PC-9 (cell line): ENCODE measurements at regions of chr2 and their contacts with region 1.

Region 1: GRCh38 chr2:55268907-55269644 is at the start of gene MTIF2:
- DNase-seq: peak; percentile 93 to 98
- H3K4me3 ChIP-seq: peak within 1 kb of the TSS; percentile 85
- H3K27ac ChIP-seq: peak within 1 kb of the TSS; percentile 64
- H3K4me1 ChIP-seq: peaks cover 14% of the 10 kb centered on the region
- H3K27me3 ChIP-seq: no peaks in the 10 kb centered on the region
- CTCF ChIP-seq: no peak
- total RNA-seq, gene MTIF2: 44.6 and 52.0 TPM in 2 replicates

Region 2: GRCh38 chr2:55232084-55232862 is 36.8 kb before region 1 on chr2 and contains the starts of genes CLHC1 and RPS27A:
- CTCF ChIA-PET with region 1: interaction called, 5 read pairs
- POLR2A ChIA-PET with region 1: no interaction called
- intact Hi-C with region 1: loop called (anchors 1 kb)
- DNase-seq: peak; percentile 94 to 98
- H3K4me3 ChIP-seq: peak within 1 kb of the TSS; percentile 97
- H3K27ac ChIP-seq: peak within 1 kb of the TSS; percentile 83
- H3K4me1 ChIP-seq: peaks cover 29% of the 10 kb centered on the region
- H3K27me3 ChIP-seq: no peaks in the 10 kb centered on the region
- CTCF ChIP-seq: peak; percentile 7; the same call in 1 of the 2 replicates
- total RNA-seq, gene CLHC1: 20.5 and 27.1 TPM in 2 replicates
- total RNA-seq, gene RPS27A: 1,269 and 1,616 TPM in 2 replicates

Region 3: GRCh38 chr2:55425431-55425831 is 156.4 kb after region 1 on chr2:
- CTCF ChIA-PET with region 1: no interaction called
- POLR2A ChIA-PET with region 1: no interaction called
- intact Hi-C with region 1: loop called (anchors 2 kb)
- DNase-seq: peak; percentile 29 to 99
- H3K4me3 ChIP-seq: no peak overlapping the region
- H3K27ac ChIP-seq: peak overlapping the region; percentile 68
- H3K4me1 ChIP-seq: peaks cover 38% of the 10 kb centered on the region
- H3K27me3 ChIP-seq: no peaks in the 10 kb centered on the region
- CTCF ChIP-seq: no peak

Region 4: DNA sequence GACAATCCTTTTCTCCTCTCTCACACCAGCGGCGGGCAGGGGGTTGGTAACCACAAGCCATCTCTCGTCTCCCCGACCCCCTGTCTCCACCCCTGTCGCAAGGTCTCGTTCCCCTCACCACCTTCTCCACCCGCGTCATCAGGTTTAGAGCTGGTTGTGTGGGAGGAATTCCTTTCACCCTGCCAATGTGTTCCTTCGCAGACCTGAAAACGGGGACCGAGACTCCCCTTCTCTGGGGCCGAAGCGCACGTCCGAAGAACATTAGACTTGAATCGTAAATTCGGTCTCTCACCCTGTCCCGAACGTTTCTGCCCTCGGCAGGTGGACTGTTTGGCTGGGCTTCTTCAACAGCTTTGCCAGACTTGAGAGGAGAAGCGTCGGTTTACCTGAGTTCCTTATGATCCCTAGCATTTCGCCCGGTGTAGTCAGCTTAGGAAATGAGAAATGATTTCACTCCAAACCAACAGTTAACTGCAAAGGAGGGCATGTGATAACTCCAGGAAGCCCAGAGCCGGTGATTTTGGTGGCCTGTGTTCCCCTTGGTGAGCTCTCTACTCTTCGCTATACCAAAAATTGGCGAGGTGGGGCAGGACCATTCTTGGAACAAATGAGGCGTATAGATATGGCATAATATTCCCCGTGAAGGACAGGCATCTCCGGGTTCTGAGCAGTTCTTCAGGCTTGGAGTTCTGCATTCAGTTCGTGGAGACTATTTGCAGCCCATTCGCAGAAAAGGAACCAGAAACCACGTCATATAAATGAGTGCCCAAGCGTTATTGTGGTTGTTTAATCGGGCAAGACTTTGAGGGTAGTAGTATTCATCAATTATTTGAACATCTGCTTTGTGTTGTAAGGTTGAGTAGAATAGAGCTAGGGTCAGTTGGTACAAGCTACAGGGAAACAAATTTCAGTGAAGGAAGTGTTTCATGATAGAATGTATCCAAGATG is 251.1 kb after region 1 on chr2:
- CTCF ChIA-PET with region 1: no interaction called
- POLR2A ChIA-PET with region 1: no interaction called
- intact Hi-C with region 1: loop called (anchors 2 kb)
- DNase-seq: peak in 1 of 2 experiments; percentile 37
- H3K4me3 ChIP-seq: peak overlapping the region; percentile 86
- H3K27ac ChIP-seq: peak overlapping the region; percentile 32
- H3K4me1 ChIP-seq: peaks cover 18% of the 10 kb centered on the region
- H3K27me3 ChIP-seq: no peaks in the 10 kb centered on the region
- CTCF ChIP-seq: no peak

Region 5: GRCh38 chr2:56132138-56132537 is 863.1 kb after region 1 on chr2:
- CTCF ChIA-PET with region 1: no interaction called
- POLR2A ChIA-PET with region 1: no interaction called
- intact Hi-C with region 1: loop called (anchors 10 kb)
- DNase-seq: peak in 1 of 2 experiments; percentile 50
- H3K4me3 ChIP-seq: no peak overlapping the region
- H3K27ac ChIP-seq: no peak overlapping the region
- H3K4me1 ChIP-seq: no peaks in the 10 kb centered on the region
- H3K27me3 ChIP-seq: peaks cover 15% of the 10 kb centered on the region
- CTCF ChIP-seq: peak; percentile 75